Right cardiac atrium (tissue), 5 donors: ENCODE measurements at regions of chr13 and their contacts with region 1.

Region 1: DNA sequence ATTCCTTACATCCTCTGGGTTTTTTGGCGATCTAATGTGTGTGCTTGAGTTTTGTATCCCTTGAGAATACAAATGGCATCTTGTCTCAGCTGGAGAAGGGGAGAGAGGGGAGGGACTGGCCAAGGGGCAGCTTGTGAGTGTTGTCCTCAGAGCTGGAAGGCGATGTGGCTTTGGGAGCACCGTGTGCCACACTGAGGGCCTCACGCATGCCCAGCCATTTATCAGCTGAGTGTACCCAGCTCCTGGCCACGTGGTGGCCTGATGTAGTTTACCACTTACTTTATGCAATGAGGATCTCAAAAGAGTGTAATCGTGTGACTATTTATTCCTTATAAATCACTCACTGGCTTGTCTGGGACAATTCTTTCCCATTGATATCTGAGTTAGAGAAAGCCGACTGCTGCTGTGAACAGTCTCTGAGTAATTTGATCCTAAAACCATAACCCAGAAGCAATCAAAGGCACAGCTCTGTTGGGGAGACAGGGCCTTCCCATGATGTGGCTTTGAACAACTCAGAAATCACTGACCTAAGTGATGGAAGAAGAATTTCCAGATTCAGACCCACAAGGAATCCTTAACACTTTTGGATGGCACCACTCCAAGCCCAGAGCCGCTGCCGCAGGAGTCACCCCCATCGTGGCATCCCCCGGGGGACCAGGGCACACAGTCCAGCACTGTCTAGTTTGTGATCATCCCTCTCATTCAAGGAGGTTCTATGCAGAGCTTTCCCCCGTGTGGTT is 53.9 kb upstream of the MTIF3 start:
- DNase-seq: no peak
- ATAC-seq: peak; percentile 23 to 40
- H3K4me3 ChIP-seq: no peak overlapping the region
- H3K27ac ChIP-seq: no peak overlapping the region
- H3K4me1 ChIP-seq: peaks cover 3% of the 10 kb centered on the region
- H3K27me3 ChIP-seq: no peaks in the 10 kb centered on the region

Region 2: DNA sequence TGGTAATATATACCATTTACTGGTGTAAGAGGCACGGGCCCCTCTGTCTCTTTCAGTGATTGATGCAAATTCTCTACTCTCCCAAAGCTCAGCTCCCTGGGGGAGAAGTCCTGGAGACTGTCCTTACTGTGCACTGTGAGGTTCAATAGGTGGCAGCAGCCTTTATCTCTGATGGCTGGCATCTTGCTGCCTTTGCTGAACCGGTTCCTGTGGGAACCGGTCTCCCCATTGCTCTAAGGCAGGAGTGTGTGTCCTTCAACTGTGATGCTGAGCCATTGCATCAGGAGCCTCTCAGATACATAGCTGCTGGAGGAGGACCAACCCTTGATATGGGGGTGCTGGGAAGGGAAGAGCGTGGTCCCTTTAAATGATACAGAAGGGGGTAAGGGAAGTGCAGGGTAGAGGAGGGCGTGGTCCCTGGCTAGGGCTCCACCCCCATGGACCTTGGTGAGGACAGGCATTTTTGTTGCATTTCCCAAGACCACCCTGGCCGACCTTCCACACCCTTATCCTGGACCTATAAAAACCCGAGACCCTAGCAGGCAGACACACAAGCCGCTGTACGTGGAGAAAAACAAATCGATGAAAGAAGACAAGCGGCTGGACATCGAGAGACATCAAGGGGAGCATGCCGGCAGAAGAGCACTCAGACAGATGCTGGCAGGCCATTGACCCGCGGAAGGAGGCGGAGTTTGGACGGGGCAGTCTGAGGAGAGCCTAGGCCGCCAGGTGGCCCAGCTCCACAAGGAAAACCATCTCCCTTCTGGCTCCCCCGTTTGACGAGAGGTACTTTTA is 121.0 kb before region 1 on chr13:
- intact Hi-C with region 1: no loop called
- DNase-seq: no peak
- ATAC-seq: no peak
- H3K4me3 ChIP-seq: no peak overlapping the region
- H3K27ac ChIP-seq: no peak overlapping the region
- H3K4me1 ChIP-seq: no peaks in the 10 kb centered on the region
- H3K27me3 ChIP-seq: no peaks in the 10 kb centered on the region

Region 3: DNA sequence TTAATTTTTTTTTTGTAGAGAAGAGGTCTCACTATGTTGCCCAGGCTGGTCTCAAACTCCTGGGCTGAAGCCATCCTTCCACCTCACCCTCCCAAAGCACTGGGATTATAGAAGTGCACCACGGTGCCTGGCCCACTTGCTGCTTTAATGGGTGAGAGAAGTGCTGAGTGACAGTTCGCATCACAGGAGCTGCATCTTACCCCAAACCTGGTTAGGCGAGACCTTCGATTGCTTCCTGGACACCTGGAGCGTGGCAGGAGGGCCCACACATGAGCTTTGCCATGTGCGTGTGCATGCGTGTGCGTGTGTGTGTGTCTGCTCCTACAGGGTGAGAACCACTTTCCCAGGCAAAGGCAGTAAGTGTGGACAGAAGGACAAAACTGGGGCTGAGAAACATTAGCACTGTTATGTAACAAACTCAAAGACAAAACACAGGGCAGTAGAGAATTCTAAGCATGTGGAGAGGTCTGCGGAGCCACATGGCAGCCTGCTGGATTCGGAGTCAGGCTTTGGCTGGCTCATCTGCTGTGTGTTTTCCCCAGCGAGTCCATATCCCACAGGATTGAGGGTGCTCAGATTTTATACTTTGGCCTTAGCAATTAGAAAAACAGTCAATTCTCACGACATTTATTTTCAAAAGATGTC is 42.2 kb before region 1 on chr13:
- intact Hi-C with region 1: no loop called
- DNase-seq: no peak
- ATAC-seq: peak in 1 of 2 donors; percentile 40
- H3K4me3 ChIP-seq: no peak overlapping the region
- H3K27ac ChIP-seq: no peak overlapping the region
- H3K4me1 ChIP-seq: no peaks in the 10 kb centered on the region
- H3K27me3 ChIP-seq: no peaks in the 10 kb centered on the region

Region 4: DNA sequence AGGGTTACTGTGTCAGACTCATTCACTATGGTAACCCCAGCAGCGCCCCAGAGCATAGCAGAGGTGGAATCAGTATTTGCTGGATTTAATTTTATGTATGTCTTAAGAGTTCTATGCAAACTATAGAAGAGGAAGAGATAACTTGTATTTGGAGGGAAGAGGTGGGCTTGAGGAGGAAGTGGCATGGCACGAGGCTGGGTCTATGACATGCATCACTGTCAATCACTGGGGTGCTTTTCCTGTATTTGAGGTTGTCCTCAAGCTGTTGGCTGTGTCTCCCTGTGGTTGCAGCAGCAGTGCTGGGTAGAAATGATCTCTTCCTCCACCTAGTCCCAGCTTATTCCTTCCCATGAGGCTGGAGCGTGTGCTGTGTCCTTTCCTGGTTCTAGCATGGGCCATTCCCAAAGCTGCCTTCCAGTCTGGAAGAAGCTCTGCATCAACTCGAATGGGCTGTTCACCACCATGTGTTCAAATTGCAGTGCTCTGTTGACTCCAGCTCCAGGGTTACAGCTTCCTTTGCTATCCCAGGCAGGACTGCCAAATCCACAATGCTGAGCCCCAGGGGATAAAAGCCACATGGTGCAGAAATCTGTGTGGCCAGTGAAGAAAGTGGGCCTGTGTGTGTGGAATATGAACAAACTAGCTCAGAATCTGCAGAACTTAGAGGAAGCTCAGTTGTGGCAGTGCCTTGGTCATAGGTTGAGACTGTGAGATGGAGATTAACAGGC is 19.2 kb after region 1 on chr13:
- intact Hi-C with region 1: no loop called
- DNase-seq: no peak
- ATAC-seq: peak in 1 of 2 donors; percentile 52
- H3K4me3 ChIP-seq: no peak overlapping the region
- H3K27ac ChIP-seq: no peak overlapping the region
- H3K4me1 ChIP-seq: no peaks in the 10 kb centered on the region
- H3K27me3 ChIP-seq: no peaks in the 10 kb centered on the region

Region 5: DNA sequence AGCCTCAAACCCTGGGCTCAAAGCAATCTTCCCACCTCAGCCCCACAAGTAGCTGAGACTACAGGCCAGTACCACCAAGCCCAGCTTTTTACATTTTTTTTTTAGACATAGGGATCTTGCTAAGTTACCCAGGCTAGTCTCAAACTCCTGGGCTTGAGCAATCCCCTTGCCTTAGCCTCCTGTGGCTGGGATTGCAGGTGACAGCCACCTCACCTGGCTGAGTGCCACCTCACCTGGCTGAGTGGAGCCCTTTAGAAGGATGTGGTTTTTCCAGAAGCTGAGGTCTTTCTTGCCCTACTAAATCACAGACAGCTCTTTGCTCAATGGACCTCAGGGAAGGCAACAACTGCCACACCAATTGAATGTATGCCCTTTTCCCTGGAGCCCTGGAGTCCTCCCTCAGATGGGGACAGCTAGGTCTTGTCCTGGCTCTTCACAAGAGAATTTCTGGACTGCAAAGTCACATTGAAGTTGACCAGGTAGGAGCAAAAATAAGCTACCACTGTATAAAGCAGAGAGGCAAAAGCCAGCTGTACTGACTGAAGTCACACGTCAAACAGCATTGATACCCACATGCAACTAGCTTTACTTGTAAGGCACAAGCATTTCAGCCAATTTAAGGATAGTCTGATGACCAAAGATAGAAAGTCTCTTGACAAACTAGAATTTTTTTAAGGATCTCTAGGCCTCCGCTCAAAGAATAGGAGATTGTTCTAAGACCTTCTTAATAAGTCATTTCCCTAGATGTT is 429.5 kb after region 1 on chr13:
- intact Hi-C with region 1: loop called in 1 of 4 experiments (anchors 10 kb)
- DNase-seq: no peak
- ATAC-seq: no peak
- H3K4me3 ChIP-seq: no peak overlapping the region
- H3K27ac ChIP-seq: no peak overlapping the region
- H3K4me1 ChIP-seq: no peaks in the 10 kb centered on the region
- H3K27me3 ChIP-seq: peaks cover 5% of the 10 kb centered on the region